IMR-90 (cell line): ENCODE measurements at regions of chr15 and their contacts with region 1.

Region 1: GRCh38 chr15:79596051-79596507 is 163.9 kb downstream of the MINAR1 start:
- DNase-seq: peak; percentile 74
- ATAC-seq: peak; percentile 94
- H3K4me3 ChIP-seq: no peak overlapping the region
- H3K27ac ChIP-seq: no peak overlapping the region
- H3K4me1 ChIP-seq: no peaks in the 10 kb centered on the region
- H3K27me3 ChIP-seq: peaks cover 14% of the 10 kb centered on the region
- CTCF ChIP-seq: peak; percentile 91
- POLR2A ChIP-seq: no peak
- RAD21 ChIP-seq: peak; percentile 78

Region 2: GRCh38 chr15:79339564-79340314 is 256.3 kb before region 1 on chr15:
- CTCF ChIA-PET with region 1: interaction called, 6 read pairs
- POLR2A ChIA-PET with region 1: interaction called, 3 read pairs
- dilution Hi-C with region 1: no loop called
- in situ Hi-C with region 1: no loop called
- intact Hi-C with region 1: loop called (anchors 2 kb)
- DNase-seq: peak; percentile 60
- ATAC-seq: peak; percentile 93
- H3K4me3 ChIP-seq: no peak overlapping the region
- H3K27ac ChIP-seq: no peak overlapping the region
- H3K4me1 ChIP-seq: no peaks in the 10 kb centered on the region
- H3K27me3 ChIP-seq: no peaks in the 10 kb centered on the region
- CTCF ChIP-seq: peak; percentile 96
- POLR2A ChIP-seq: no peak
- RAD21 ChIP-seq: peak; percentile 85

Region 3: GRCh38 chr15:79380755-79381497 is 215.2 kb before region 1 on chr15:
- CTCF ChIA-PET with region 1: interaction called, 20 read pairs
- POLR2A ChIA-PET with region 1: no interaction called
- dilution Hi-C with region 1: no loop called
- in situ Hi-C with region 1: no loop called
- intact Hi-C with region 1: loop called (anchors 1 kb)
- DNase-seq: peak; percentile 74
- ATAC-seq: peak; percentile 98
- H3K4me3 ChIP-seq: no peak overlapping the region
- H3K27ac ChIP-seq: no peak overlapping the region
- H3K4me1 ChIP-seq: no peaks in the 10 kb centered on the region
- H3K27me3 ChIP-seq: no peaks in the 10 kb centered on the region
- CTCF ChIP-seq: peak; percentile 90
- POLR2A ChIP-seq: no peak; the same call in 1 of the 2 replicates
- RAD21 ChIP-seq: peak; percentile 92

Region 4: GRCh38 chr15:79442911-79443310 is 153.2 kb before region 1 on chr15:
- CTCF ChIA-PET with region 1: no interaction called
- POLR2A ChIA-PET with region 1: no interaction called
- dilution Hi-C with region 1: no loop called
- in situ Hi-C with region 1: no loop called
- intact Hi-C with region 1: no loop called
- DNase-seq: no peak
- ATAC-seq: no peak
- H3K4me3 ChIP-seq: no peak overlapping the region
- H3K27ac ChIP-seq: no peak overlapping the region
- H3K4me1 ChIP-seq: no peaks in the 10 kb centered on the region
- H3K27me3 ChIP-seq: no peaks in the 10 kb centered on the region
- CTCF ChIP-seq: no peak
- POLR2A ChIP-seq: no peak
- RAD21 ChIP-seq: no peak

Region 5: DNA sequence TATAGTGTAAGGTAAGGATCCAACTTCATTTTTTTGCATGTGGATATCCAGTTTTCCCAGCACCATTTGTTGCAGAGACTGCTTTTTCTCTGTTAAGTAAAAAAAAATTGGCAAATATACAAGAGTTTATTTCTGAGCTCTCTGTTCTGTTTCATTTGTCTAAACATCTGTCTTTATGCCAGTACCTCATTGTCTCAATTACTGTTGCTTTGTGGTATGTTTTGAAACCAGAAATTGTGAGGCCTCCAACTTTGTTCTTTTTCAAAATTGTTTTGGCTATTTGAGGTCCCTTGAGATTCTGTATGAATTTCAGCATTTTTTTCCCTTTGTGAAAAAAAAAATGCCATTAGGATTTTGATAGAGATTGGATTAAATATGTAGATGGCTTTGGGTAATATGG is 13.4 kb before region 1 on chr15:
- CTCF ChIA-PET with region 1: interaction called, 13 read pairs
- POLR2A ChIA-PET with region 1: no interaction called
- dilution Hi-C with region 1: no loop called
- in situ Hi-C with region 1: no loop called
- intact Hi-C with region 1: no loop called
- DNase-seq: no peak
- ATAC-seq: no peak
- H3K4me3 ChIP-seq: no peak overlapping the region
- H3K27ac ChIP-seq: no peak overlapping the region
- H3K4me1 ChIP-seq: no peaks in the 10 kb centered on the region
- H3K27me3 ChIP-seq: peaks cover 4% of the 10 kb centered on the region; the same call in 1 of the 2 replicates
- CTCF ChIP-seq: no peak
- POLR2A ChIP-seq: no peak
- RAD21 ChIP-seq: no peak

Region 6: GRCh38 chr15:79853458-79854328 is 257.6 kb after region 1 on chr15:
- CTCF ChIA-PET with region 1: interaction called, 3 read pairs
- POLR2A ChIA-PET with region 1: no interaction called
- dilution Hi-C with region 1: no loop called
- in situ Hi-C with region 1: no loop called
- intact Hi-C with region 1: loop called (anchors 5 kb)
- DNase-seq: peak; percentile 93
- ATAC-seq: peak; percentile 100
- H3K4me3 ChIP-seq: no peak overlapping the region
- H3K27ac ChIP-seq: no peak overlapping the region
- H3K4me1 ChIP-seq: no peaks in the 10 kb centered on the region
- H3K27me3 ChIP-seq: no peaks in the 10 kb centered on the region
- CTCF ChIP-seq: peak; percentile 95
- POLR2A ChIP-seq: no peak
- RAD21 ChIP-seq: peak; percentile 90